Activated T-helper 1 cell treated with anti-CD3 and anti-CD28 coated beads, Interleukin-12 subunit alpha, Interleukin-12 subunit beta, Interleukin-2, Interleukin-4 antibody, amounts not matched to agents 30 ng/mL and 10 ng/mL and 1 ng/mL, durations not matched to agents 14 hours and 24 hours and 36 hours (primary cell): ENCODE measurements at regions of chr1 and their contacts with region 1.

Region 1: GRCh38 chr1:121471523-121471922 is 286.7 kb downstream of the SRGAP2C start:
- DNase-seq: no peak
- H3K4me3 Mint-ChIP-seq: peak overlapping the region; percentile 23
- H3K27ac Mint-ChIP-seq: peak overlapping the region; percentile 62
- H3K4me1 Mint-ChIP-seq: peaks cover 48% of the 10 kb centered on the region
- H3K27me3 Mint-ChIP-seq: no peaks in the 10 kb centered on the region

Region 2: GRCh38 chr1:121483961-121484424 is 12.5 kb after region 1 on chr1:
- intact Hi-C with region 1: loop called (anchors 2 kb)
- DNase-seq: no peak
- H3K4me3 Mint-ChIP-seq: no peak overlapping the region
- H3K27ac Mint-ChIP-seq: peak overlapping the region; percentile 61
- H3K4me1 Mint-ChIP-seq: peaks cover 34% of the 10 kb centered on the region
- H3K27me3 Mint-ChIP-seq: no peaks in the 10 kb centered on the region

Region 3: DNA sequence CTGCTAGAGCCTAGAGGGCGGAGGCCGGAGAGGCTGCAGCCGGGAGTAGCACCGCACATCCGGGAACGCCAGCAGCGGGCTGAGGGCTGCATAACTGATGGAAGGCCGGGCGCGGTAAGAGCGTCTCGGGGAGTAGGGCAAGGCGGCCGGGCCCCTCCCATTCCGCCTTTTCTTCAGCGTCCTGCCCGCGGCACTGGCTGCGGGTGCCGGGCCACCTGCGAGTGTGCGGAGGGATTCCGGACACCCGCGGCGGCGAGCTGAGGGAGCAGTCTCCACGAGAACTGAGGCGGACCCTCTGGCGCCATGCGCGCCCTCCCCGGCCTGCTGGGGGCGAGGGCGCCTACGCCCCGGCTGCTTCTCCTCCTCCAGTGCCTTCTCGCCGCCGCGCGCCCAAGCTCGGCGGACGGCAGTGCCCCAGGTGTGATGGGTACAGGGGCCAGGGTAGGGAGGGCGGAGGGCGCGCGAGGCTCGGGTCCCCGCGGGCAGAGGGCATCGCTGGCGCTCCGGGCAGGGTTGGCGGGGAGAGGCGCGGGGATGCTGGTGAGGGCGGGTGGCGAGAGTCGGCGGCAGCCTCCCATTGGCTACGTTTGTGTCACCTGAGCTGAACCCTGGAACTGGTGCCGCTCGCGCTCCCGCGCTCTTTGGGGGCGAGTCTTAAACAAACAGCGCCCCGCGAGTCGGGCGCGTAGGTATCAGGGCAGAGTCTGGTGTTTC is 47.7 kb after region 1 on chr1:
- intact Hi-C with region 1: loop called (anchors 1 kb)
- DNase-seq: peak; percentile 83
- H3K4me3 Mint-ChIP-seq: peak overlapping the region; percentile 96
- H3K27ac Mint-ChIP-seq: peak overlapping the region; percentile 96
- H3K4me1 Mint-ChIP-seq: peaks cover 74% of the 10 kb centered on the region
- H3K27me3 Mint-ChIP-seq: no peaks in the 10 kb centered on the region

Region 4: DNA sequence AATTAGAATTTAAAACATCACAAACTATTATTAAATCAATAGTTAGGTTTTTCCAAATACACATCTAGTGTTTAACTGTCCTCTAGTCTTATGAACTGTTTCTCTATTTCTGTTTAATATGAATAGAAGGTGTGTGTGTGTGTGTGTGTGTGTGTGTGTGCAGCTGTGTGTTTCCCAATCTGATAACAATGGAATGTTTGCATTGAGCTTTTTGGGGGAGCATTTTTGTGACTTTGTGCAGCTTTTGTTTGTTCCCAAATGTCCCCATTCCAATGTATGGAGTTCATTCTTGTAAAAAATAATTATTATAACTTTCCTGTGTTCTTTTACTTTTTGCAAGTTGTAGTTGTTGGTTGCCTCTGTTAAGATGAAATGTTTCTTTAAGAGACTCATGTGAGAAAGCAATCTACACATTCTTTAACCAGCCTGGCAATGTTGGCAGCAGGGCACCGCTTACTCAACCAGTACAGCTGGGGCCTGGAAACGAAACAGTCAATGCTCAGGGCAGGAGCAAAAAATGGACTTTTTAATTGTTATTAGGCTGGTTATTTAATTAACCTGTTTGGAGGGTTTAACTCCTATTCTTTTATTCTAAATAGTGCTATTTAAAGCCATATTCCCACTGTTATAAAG is 67.5 kb after region 1 on chr1:
- intact Hi-C with region 1: no loop called
- DNase-seq: no peak
- H3K4me3 Mint-ChIP-seq: no peak overlapping the region
- H3K27ac Mint-ChIP-seq: no peak overlapping the region
- H3K4me1 Mint-ChIP-seq: no peaks in the 10 kb centered on the region
- H3K27me3 Mint-ChIP-seq: no peaks in the 10 kb centered on the region